ENCODE measurements at regions of chr17 and their contacts with region 1.

Region 1: GRCh38 chr17:38584350-38584925 is 21.3 kb downstream of the SRCIN1 start:
- DNase-seq: peak in 1 of 2 donors; percentile 79
- H3K4me3 ChIP-seq: no peak overlapping the region
- H3K27ac ChIP-seq: no peak overlapping the region
- H3K4me1 ChIP-seq: peaks cover 0 to 6% of the 10 kb centered on the region in 2 donors
- H3K27me3 ChIP-seq: peaks cover 5% of the 10 kb centered on the region
- CTCF ChIP-seq: peak; percentile 88 to 98 (median 95)

Region 2: DNA sequence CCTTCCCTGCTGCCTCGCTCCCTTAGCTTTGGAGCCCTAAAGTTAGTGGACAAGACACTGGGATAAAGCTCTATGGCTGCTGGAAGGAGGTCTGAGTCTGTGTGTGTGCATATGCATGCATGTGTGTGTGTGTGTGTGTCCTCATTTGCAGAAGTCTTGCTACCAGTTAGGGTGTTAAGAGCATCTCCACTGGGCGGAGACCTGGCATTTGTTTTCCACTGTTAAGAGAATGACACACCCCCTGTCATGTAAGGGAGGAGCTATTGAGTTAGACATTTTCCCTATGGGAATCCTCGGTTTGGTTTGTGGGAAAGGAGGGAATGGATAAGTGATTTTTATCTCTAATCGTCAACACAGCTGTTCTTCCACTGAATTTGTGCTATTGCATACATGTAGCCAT is 180.9 kb before region 1 on chr17:
- intact Hi-C with region 1: no loop called
- DNase-seq: no peak
- H3K4me3 ChIP-seq: no peak overlapping the region
- H3K27ac ChIP-seq: no peak overlapping the region
- H3K4me1 ChIP-seq: no peaks in the 10 kb centered on the region
- H3K27me3 ChIP-seq: no peaks in the 10 kb centered on the region
- CTCF ChIP-seq: no peak

Region 3: GRCh38 chr17:38421171-38421841 is 163.1 kb before region 1 on chr17:
- intact Hi-C with region 1: loop called (anchors 5 kb)
- DNase-seq: peak in 1 of 2 donors; percentile 81
- H3K4me3 ChIP-seq: peak overlapping the region; percentile 14 to 50
- H3K27ac ChIP-seq: peak overlapping the region; percentile 82 to 84
- H3K4me1 ChIP-seq: peaks cover 15 to 43% of the 10 kb centered on the region in 2 donors
- H3K27me3 ChIP-seq: no peaks in the 10 kb centered on the region
- CTCF ChIP-seq: no peak

Region 4: GRCh38 chr17:38539386-38539785 is 45.1 kb before region 1 on chr17:
- intact Hi-C with region 1: no loop called
- DNase-seq: no peak
- H3K4me3 ChIP-seq: no peak overlapping the region
- H3K27ac ChIP-seq: no peak overlapping the region
- H3K4me1 ChIP-seq: no peaks in the 10 kb centered on the region
- H3K27me3 ChIP-seq: no peaks in the 10 kb centered on the region
- CTCF ChIP-seq: no peak

Region 5: DNA sequence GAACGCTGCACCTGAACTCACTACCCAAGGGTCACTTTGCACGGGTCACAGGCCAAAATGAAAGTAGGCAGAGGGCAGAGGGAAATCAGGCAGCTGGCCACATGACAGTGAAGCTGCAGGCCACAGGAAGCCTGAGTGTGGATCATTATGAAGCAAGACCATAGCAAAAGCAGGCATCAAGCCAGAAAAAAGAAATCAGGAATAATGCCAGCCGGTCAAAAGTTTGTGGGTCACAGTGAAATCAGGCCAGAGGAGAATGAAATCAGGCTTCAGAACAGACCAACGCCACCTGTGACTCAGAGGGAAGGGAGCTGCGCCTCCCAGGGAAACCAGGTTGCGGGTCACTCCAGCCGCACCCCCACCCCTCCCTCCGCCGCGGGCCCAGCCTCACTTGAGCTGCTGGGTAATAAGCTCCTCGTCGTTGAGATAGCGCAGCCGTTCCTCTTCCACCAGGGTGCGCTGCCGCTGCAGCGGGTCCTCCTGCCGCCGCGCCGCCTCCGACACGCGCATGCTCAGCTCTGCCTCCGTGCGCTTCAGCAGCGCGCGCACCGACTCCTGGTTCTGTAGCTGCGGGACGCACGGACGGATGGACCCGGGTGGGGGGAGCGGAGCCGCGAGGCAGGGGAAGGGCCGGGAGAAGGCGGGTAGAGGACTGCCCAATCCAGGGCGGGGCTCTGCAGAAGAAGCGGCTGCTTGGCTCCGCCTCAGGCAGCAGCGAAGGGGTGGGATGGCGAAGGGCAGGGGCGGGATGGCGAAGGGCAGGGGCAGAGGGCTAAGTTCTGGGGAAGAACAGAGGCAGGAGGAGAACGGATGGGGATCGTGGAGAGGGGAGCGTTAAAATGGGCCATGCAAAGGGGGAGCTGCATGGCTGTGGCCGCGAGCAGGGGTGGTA is 26.4 kb before region 1 on chr17:
- intact Hi-C with region 1: loop called (anchors 1 kb)
- DNase-seq: peak; percentile 67 to 93
- H3K4me3 ChIP-seq: peak overlapping the region; percentile 35 to 58
- H3K27ac ChIP-seq: no peak overlapping the region
- H3K4me1 ChIP-seq: peaks cover 7 to 14% of the 10 kb centered on the region in 2 donors
- H3K27me3 ChIP-seq: peaks cover 39% of the 10 kb centered on the region
- CTCF ChIP-seq: peak; percentile 86 to 92 (median 90)

Region 6: DNA sequence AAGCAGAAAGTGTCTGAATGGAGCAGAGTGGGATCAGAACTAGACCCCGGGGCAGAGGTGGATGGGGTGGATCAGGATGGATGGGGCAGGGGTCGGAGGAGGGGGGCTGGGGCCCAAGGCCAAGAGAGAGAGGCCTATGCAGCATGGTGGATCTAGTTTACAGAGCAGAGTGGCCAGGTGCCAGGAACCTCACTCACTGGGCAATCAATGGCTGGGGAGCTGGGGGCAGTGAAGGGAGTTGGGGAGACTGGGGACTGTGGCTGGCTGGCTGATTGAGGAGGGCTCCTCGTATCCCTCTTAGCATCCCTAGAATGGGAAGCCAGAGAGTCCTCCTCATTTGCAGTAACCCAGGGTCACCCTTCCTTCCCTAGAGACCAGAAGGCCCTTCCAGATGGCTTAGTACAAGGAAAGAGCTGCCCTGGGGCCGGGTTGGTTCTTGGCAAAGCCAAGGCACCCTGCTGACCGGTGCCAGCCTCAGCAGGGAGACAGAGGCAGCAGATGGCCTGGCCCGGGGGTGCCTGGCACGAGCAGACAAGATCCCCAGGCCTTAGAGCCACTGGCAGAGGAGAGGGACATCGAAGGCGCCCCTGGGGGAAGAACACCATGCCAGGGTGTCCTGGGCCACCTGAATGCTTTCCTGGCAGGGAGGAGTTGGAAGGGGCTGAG is 15.5 kb before region 1 on chr17:
- intact Hi-C with region 1: no loop called
- DNase-seq: no peak
- H3K4me3 ChIP-seq: no peak overlapping the region
- H3K27ac ChIP-seq: no peak overlapping the region
- H3K4me1 ChIP-seq: peaks cover 3 to 7% of the 10 kb centered on the region in 2 donors
- H3K27me3 ChIP-seq: peaks cover 19% of the 10 kb centered on the region
- CTCF ChIP-seq: no peak